Right ventricle myocardium inferior (tissue), 1 donor: ENCODE measurements at regions of chrX and their contacts with region 1.

Region 1: GRCh38 chrX:153687121-153688039 is at the start of gene SLC6A8:
- DNase-seq: peak; percentile 86
- ATAC-seq: peak; percentile 64
- total RNA-seq, gene SLC6A8: 178 TPM

Region 2: GRCh38 chrX:153327561-153327960 is 359.8 kb before region 1 on chrX:
- intact Hi-C with region 1: no loop called
- DNase-seq: no peak
- ATAC-seq: no peak

Region 3: GRCh38 chrX:153582896-153583295 is 104.5 kb before region 1 on chrX:
- intact Hi-C with region 1: no loop called
- DNase-seq: no peak
- ATAC-seq: no peak

Region 4: DNA sequence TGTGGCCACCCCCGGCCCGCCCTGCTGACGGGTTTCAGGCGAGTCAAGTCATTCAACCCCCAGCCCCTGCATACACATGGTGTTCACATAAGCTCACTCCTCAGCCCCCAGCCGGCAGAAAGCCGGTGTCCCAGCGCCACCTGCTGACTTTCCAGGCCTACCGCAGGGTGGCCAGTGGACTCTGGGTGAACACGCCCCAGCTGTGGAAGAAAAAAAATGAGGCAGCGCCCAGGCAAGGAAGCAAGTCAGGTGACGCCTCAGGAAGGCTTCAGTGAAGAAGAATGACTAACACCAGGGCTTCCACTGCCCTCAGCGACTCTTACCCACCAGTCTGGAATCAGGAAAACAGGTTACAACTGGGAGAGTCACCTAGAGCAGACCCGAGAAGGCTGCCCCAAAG is 21.0 kb after region 1 on chrX:
- intact Hi-C with region 1: loop called (anchors 2 kb)
- DNase-seq: no peak
- ATAC-seq: peak; percentile 76

Region 5: GRCh38 chrX:153724252-153725040 is 37.1 kb after region 1 on chrX and contains the starts of genes ABCD1 and BCAP31:
- intact Hi-C with region 1: loop called (anchors 5 kb)
- DNase-seq: peak; percentile 95
- ATAC-seq: peak; percentile 86
- total RNA-seq, gene ABCD1: 16.4 TPM
- total RNA-seq, gene BCAP31: 98.5 TPM